ENCODE measurements at regions of chr17 and their contacts with region 1.

Region 1: GRCh38 chr17:39235555-39236449 is 10.1 kb upstream of the STAC2 start:
- DNase-seq: peak; percentile 63
- ATAC-seq: peak; percentile 22
- H3K4me3 ChIP-seq: no peak overlapping the region
- H3K4me3 Mint-ChIP-seq: no peak overlapping the region
- H3K27ac ChIP-seq: no peak overlapping the region
- H3K27ac Mint-ChIP-seq: peak overlapping the region; percentile 56
- H3K4me1 ChIP-seq: peaks cover 25 to 35% of the 10 kb centered on the region in 2 donors
- H3K4me1 Mint-ChIP-seq: peaks cover 31% of the 10 kb centered on the region
- H3K27me3 ChIP-seq: peaks cover 0 to 17% (median 16%) of the 10 kb centered on the region in 4 experiments
- H3K27me3 Mint-ChIP-seq: peaks cover 22% of the 10 kb centered on the region
- CTCF ChIP-seq: peak; percentile 57

Region 2: DNA sequence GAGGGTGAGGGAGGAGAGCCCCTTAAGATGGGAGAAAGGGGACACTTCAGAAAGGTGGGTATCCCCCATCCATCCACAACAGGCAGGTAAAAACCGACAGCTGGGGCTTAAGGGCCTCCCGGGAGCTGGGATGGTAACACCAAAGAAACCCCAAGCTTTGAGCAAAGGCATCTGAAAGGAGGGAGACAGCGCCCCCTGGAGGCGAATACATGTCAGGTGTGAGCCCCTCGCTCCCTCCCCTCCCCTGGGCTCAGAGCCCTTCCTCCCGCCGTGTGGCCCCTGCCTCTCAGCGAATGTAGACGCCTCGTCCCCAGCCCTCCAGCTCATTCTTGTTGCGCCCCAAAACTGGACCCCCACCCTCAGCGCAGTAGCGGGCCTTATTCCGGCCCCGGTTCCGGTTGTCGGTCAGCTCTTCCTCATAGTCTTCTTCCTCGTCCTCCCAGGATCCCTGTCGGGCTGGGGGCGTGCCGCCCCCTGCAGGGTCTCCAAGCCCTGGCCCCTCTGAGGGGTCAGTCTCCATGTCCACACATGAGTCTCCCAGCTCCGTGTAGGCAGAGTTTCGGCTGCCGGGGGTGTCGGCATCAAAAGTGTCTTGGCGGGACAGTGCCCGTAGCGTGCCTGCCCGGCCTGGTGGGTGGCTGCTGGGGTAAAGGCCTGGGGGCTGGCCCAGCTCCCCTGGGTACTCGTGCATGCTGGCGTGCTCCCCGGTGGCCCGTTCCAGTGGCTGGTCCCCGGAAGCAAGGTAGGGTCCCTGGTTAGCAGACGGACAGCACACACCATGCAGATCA is 60.7 kb before region 1 on chr17:
- CTCF ChIA-PET with region 1: interaction called, 13 read pairs
- POLR2A ChIA-PET with region 1: no interaction called
- intact Hi-C with region 1: no loop called
- DNase-seq: peak; percentile 83
- ATAC-seq: peak; percentile 76
- H3K4me3 ChIP-seq: peak overlapping the region in 2 of 5 experiments; percentile 9 to 35
- H3K4me3 Mint-ChIP-seq: peak overlapping the region; percentile 53
- H3K27ac ChIP-seq: no peak overlapping the region
- H3K27ac Mint-ChIP-seq: no peak overlapping the region
- H3K4me1 ChIP-seq: peaks cover 0 to 7% of the 10 kb centered on the region in 2 donors
- H3K4me1 Mint-ChIP-seq: peaks cover 5% of the 10 kb centered on the region
- H3K27me3 ChIP-seq: peaks cover 0 to 30% (median 10%) of the 10 kb centered on the region in 4 experiments
- H3K27me3 Mint-ChIP-seq: peaks cover 23% of the 10 kb centered on the region
- CTCF ChIP-seq: peak; percentile 82

Region 3: DNA sequence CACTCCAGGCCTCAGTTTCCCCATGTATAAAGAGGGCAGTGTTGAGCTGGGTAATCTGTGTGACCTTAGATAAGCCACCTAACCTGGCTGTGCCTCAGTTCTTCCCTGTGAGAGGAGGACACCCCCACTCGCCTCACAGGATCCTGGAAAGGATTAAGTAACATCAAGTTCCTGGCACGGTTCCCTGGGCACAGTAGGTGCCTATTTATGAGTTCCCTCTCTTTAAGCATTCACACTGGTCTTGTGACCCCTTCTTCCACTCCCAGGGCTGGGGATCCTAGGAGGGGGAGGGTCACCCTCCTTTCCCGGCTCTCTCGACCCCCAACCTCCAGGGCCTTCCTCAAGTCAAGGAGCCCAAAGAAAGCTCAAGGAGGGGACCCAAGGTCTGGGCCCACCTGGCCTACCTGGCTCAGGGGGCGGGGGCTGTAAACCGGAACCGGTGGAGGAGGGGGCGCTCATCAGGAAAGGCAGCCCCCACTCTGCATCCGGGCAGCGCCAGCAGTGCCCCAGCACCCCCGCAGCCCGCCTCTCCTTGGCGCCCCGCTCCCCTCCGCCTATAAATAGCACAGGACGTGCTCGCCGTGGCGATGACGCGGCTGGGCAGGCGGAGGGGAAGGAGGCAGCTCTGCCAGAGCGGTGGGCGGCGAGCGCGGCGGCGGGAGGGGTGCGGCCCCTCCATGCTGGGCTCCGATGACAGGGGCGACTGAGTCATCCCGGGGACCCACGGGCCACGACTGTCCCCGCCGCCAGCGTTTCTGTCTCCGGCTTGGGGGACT is 26.3 kb before region 1 on chr17:
- CTCF ChIA-PET with region 1: interaction called, 707 read pairs
- POLR2A ChIA-PET with region 1: interaction called, 5 read pairs
- intact Hi-C with region 1: loop called (anchors 1 kb)
- DNase-seq: peak; percentile 65
- ATAC-seq: peak; percentile 40
- H3K4me3 ChIP-seq: peak overlapping the region in 4 of 5 experiments; percentile 35 to 52 (median 48)
- H3K4me3 Mint-ChIP-seq: peak overlapping the region; percentile 77
- H3K27ac ChIP-seq: no peak overlapping the region
- H3K27ac Mint-ChIP-seq: peak overlapping the region; percentile 68
- H3K4me1 ChIP-seq: peaks cover 32 to 39% of the 10 kb centered on the region in 2 donors
- H3K4me1 Mint-ChIP-seq: peaks cover 33% of the 10 kb centered on the region
- H3K27me3 ChIP-seq: peaks cover 0 to 12% (median 3%) of the 10 kb centered on the region in 4 experiments
- H3K27me3 Mint-ChIP-seq: no peaks in the 10 kb centered on the region
- CTCF ChIP-seq: no peak

Measured in B cell (primary cell).